ENCODE measurements at regions of chrX and their contacts with region 1.

Region 1: GRCh38 chrX:71239781-71240180 is 14.2 kb downstream of the ZMYM3 start:
- DNase-seq: no peak
- ATAC-seq: no peak
- H3K4me3 ChIP-seq: no peak overlapping the region
- H3K27ac ChIP-seq: no peak overlapping the region
- H3K4me1 ChIP-seq: no peaks in the 10 kb centered on the region
- H3K27me3 ChIP-seq: no peaks in the 10 kb centered on the region; the same call in none of the 2 replicates
- CTCF ChIP-seq: no peak
- POLR2A ChIP-seq: no peak
- RAD21 ChIP-seq: no peak

Region 2: DNA sequence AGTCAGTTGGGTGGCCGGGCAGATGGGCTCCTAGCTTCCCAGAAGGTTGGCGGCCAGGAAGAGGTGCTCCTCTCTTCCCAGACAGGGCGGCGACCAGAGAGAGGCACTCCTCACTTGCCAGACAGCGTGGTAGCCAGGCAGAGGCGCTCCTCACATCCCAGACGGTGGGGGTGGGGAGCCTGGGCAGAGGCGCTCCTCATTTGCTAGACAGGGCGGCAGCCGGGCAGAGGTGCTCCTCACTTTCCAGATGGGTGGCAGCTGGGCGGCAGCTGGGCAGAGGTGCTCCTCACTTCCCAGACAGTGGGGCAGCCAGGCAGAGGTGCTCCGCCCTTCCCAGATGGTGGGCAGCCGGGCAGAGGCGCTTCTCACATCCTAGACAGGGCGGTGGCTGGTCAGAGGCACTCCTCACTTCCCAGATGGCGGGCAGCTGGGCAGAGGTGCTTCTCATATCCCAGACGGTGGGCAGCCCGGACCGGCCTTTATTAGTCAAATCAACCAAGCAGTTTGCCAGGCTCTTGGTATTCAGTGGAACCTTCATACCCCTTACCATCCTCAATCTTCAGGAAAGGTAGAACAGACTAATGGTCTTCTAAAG is 30.1 kb after region 1 on chrX:
- CTCF ChIA-PET with region 1: no interaction called
- POLR2A ChIA-PET with region 1: no interaction called
- dilution Hi-C with region 1: no loop called
- in situ Hi-C with region 1: no loop called
- intact Hi-C with region 1: loop called (anchors 2 kb)
- DNase-seq: no peak
- ATAC-seq: no peak
- H3K4me3 ChIP-seq: no peak overlapping the region
- H3K27ac ChIP-seq: no peak overlapping the region
- H3K4me1 ChIP-seq: no peaks in the 10 kb centered on the region
- H3K27me3 ChIP-seq: no peaks in the 10 kb centered on the region
- CTCF ChIP-seq: no peak
- POLR2A ChIP-seq: no peak
- RAD21 ChIP-seq: no peak

Region 3: GRCh38 chrX:71364221-71364620 is 124.4 kb after region 1 on chrX:
- CTCF ChIA-PET with region 1: no interaction called
- POLR2A ChIA-PET with region 1: no interaction called
- dilution Hi-C with region 1: no loop called
- in situ Hi-C with region 1: no loop called
- intact Hi-C with region 1: no loop called
- DNase-seq: no peak
- ATAC-seq: no peak
- H3K4me3 ChIP-seq: no peak overlapping the region
- H3K27ac ChIP-seq: no peak overlapping the region
- H3K4me1 ChIP-seq: no peaks in the 10 kb centered on the region; the same call in 1 of the 2 replicates
- H3K27me3 ChIP-seq: no peaks in the 10 kb centered on the region
- CTCF ChIP-seq: no peak
- POLR2A ChIP-seq: no peak
- RAD21 ChIP-seq: no peak

Region 4: GRCh38 chrX:71859637-71860036 is 619.9 kb after region 1 on chrX:
- CTCF ChIA-PET with region 1: no interaction called
- POLR2A ChIA-PET with region 1: no interaction called
- dilution Hi-C with region 1: no loop called
- in situ Hi-C with region 1: no loop called
- intact Hi-C with region 1: no loop called
- DNase-seq: peak; percentile 33
- ATAC-seq: peak; percentile 72; the same call in 1 of the 2 replicates
- H3K4me3 ChIP-seq: no peak overlapping the region
- H3K27ac ChIP-seq: no peak overlapping the region
- H3K4me1 ChIP-seq: no peaks in the 10 kb centered on the region
- H3K27me3 ChIP-seq: peaks cover 21% of the 10 kb centered on the region
- CTCF ChIP-seq: peak; percentile 62
- POLR2A ChIP-seq: no peak
- RAD21 ChIP-seq: peak; percentile 54